Panc1 (cell line): ENCODE measurements at regions of chr17 and their contacts with region 1.

Region 1: DNA sequence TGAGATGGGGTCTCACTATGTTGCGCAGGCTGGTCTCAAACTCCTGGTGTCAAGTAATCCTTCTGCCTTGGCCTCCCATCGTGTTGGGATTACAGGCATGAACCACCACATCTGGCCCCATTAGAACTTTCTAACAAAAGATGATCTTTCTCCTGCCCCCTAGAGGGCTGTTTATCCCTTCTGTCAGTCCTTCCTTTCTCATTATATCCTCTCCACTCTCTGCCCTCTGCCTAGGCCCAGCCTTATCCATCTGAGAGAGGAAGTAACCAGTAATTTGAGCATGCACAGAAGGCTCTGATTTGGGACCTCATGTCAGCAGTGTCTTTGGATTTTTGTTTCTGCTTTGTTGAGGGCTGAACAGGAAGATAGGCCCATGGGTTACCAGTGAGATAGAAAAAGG is 4.4 kb upstream of the DHX40 start:
- DNase-seq: no peak
- ATAC-seq: no peak
- H3K4me3 ChIP-seq: no peak overlapping the region
- H3K27ac ChIP-seq: no peak overlapping the region
- H3K4me1 ChIP-seq: no peaks in the 10 kb centered on the region
- H3K27me3 ChIP-seq: no peaks in the 10 kb centered on the region
- CTCF ChIP-seq: peak; percentile 57

Region 2: DNA sequence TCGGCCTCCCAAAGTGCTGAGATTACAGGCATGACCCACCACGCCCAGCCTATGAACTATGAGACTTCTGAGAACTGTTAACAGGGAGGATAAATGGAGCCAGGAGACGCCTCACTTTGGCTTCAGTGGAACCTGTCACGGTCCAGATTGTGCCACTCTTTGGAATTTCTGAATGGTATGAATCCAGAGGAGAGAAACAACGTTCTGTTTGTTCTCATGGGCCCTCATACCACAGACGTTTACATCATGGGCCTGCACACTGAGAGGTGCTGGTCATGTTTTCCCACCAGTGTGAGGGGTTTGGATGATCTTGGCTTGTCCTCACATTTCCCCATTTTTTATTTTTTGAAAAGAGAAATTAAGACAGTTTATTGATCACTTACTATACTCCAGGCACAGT is 139.3 kb before region 1 on chr17:
- CTCF ChIA-PET with region 1: no interaction called
- POLR2A ChIA-PET with region 1: interaction called, 10 read pairs
- in situ Hi-C with region 1: no loop called
- intact Hi-C with region 1: no loop called
- DNase-seq: no peak
- ATAC-seq: no peak
- H3K4me3 ChIP-seq: no peak overlapping the region
- H3K27ac ChIP-seq: no peak overlapping the region
- H3K4me1 ChIP-seq: no peaks in the 10 kb centered on the region
- H3K27me3 ChIP-seq: no peaks in the 10 kb centered on the region
- CTCF ChIP-seq: no peak